ENCODE measurements at regions of chr6 and their contacts with region 1.

Region 1: GRCh38 chr6:722077-722524 is 29.2 kb upstream of the EXOC2 start:
- DNase-seq: peak; percentile 85
- ATAC-seq: peak; percentile 92
- H3K4me3 Mint-ChIP-seq: no peak overlapping the region
- H3K27ac Mint-ChIP-seq: no peak overlapping the region
- H3K4me1 Mint-ChIP-seq: peaks cover 6% of the 10 kb centered on the region
- H3K27me3 Mint-ChIP-seq: peaks cover 13% of the 10 kb centered on the region

Region 2: GRCh38 chr6:610882-611281 is 111.2 kb before region 1 on chr6:
- CTCF ChIA-PET with region 1: no interaction called
- POLR2A ChIA-PET with region 1: no interaction called
- DNase-seq: no peak
- ATAC-seq: no peak
- H3K4me3 Mint-ChIP-seq: no peak overlapping the region
- H3K27ac Mint-ChIP-seq: peak overlapping the region; percentile 58
- H3K4me1 Mint-ChIP-seq: peaks cover 9% of the 10 kb centered on the region
- H3K27me3 Mint-ChIP-seq: no peaks in the 10 kb centered on the region

Region 3: DNA sequence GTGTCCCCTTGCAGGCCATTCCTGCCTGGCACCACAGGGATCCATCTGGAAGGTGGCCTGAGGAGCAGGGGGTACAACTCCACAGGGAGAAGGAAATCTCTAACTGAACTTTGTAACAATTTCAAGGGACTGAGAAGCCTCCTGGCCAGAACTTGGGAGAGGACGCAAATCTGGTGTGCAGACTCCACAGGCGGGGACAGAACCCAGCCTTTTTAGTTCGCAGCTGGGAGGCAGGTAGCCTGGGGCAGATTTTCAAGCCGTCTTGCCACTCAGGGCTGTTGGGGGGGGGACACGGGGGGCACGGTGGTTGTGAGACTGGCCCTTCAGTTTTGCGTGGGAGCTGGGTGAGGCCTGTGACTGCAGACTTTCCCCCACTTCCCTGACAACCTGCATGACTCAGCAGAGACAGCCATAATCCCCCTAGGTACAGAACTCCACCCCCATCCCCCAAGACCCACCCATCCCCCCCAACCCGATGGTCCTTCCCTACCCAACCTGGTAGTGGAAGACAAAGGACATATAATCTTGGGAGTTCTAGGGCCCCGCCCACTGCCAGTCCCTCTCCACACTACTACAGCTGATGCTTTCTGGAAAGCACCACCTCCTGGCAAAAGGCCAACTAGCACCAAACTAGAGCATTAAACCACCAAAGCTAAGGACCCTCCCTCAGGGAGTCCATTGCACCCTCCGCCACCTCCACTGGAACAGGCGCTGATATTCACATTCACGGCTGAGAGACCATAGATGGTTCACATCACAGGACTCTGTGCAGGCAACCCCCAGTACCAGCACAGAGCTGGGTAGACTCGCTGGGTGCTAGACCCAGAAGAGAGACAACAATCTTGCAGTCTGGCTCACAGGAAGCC is 62.2 kb before region 1 on chr6:
- CTCF ChIA-PET with region 1: interaction called, 15 read pairs
- POLR2A ChIA-PET with region 1: no interaction called
- DNase-seq: peak; percentile 25
- ATAC-seq: peak; percentile 42
- H3K4me3 Mint-ChIP-seq: peak overlapping the region; percentile 35
- H3K27ac Mint-ChIP-seq: peak overlapping the region; percentile 82
- H3K4me1 Mint-ChIP-seq: peaks cover 56% of the 10 kb centered on the region
- H3K27me3 Mint-ChIP-seq: no peaks in the 10 kb centered on the region

Region 4: DNA sequence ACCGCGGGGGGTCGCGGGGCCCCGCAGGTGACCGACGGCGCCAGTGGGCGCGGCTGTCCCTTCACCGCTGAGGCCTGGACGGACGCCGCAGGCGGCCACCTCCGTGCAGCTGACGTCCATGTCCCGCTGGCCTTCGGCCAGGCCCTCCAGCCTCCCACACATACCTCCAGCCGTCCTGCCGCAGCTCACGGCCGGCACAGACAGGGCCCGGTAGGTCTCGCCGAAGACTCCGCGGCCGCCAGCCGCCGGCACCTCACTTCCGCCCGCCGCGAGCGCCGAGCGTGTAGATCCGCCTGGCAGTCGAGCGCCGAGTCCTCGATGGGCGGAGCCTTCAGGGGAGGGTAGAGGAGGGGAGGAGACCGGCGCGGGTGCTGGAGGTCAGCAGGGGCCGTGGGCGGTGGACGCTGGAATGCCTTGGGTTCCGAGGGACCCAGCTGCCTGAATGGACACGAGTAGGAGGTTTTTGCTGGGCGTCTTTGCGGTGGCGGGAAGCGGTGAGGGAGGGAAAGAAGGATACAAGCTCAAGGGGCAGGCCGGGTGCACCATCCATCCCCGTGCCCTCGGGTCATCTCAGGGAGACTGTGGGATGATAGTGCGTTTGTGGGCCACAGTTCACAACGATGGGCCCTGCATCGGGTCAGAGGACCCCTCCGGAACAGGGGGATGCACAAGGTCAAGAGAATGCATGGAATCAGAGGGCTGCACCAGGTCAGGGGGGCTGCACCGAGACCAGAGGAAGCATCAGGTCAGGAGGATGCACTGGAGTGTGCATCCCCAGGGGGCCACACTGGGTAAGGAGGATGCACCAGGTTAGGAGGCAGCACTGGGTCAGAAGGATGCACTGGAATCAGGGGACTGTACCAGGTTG is 29.0 kb before region 1 on chr6 and contains the start of gene EXOC2:
- CTCF ChIA-PET with region 1: interaction called, 11 read pairs
- POLR2A ChIA-PET with region 1: no interaction called
- DNase-seq: peak; percentile 89
- ATAC-seq: peak; percentile 79
- H3K4me3 Mint-ChIP-seq: peak within 1 kb of the TSS; percentile 96
- H3K27ac Mint-ChIP-seq: peak within 1 kb of the TSS; percentile 92
- H3K4me1 Mint-ChIP-seq: peaks cover 37% of the 10 kb centered on the region
- H3K27me3 Mint-ChIP-seq: no peaks in the 10 kb centered on the region
- total RNA-seq, gene EXOC2: 34.5 to 34.9 TPM

Region 5: GRCh38 chr6:710601-711571 is 11.2 kb before region 1 on chr6:
- CTCF ChIA-PET with region 1: interaction called, 51 read pairs
- POLR2A ChIA-PET with region 1: no interaction called
- DNase-seq: peak; percentile 69
- ATAC-seq: peak; percentile 89
- H3K4me3 Mint-ChIP-seq: peak overlapping the region; percentile 92
- H3K27ac Mint-ChIP-seq: peak overlapping the region; percentile 98
- H3K4me1 Mint-ChIP-seq: peaks cover 26% of the 10 kb centered on the region
- H3K27me3 Mint-ChIP-seq: peaks cover 5% of the 10 kb centered on the region